PC-3 (cell line): ENCODE measurements at regions of chr11 and their contacts with region 1.

Region 1: GRCh38 chr11:34926101-34926830 is 9.8 kb downstream of the PDHX start:
- DNase-seq: peak; percentile 67
- ATAC-seq: peak; percentile 56
- H3K4me3 ChIP-seq: no peak overlapping the region
- H3K27ac ChIP-seq: no peak overlapping the region
- H3K4me1 ChIP-seq: peaks cover 12% of the 10 kb centered on the region
- H3K27me3 ChIP-seq: no peaks in the 10 kb centered on the region
- CTCF ChIP-seq: peak; percentile 86

Region 2: GRCh38 chr11:34977089-34977906 is 51.0 kb after region 1 on chr11:
- CTCF ChIA-PET with region 1: no interaction called
- POLR2A ChIA-PET with region 1: no interaction called
- intact Hi-C with region 1: loop called (anchors 5 kb)
- DNase-seq: peak; percentile 81
- ATAC-seq: peak; percentile 89
- H3K4me3 ChIP-seq: peak overlapping the region; percentile 38; the same call in 1 of the 2 replicates
- H3K27ac ChIP-seq: peak overlapping the region; percentile 91
- H3K4me1 ChIP-seq: peaks cover 43% of the 10 kb centered on the region
- H3K27me3 ChIP-seq: no peaks in the 10 kb centered on the region
- CTCF ChIP-seq: no peak

Region 3: DNA sequence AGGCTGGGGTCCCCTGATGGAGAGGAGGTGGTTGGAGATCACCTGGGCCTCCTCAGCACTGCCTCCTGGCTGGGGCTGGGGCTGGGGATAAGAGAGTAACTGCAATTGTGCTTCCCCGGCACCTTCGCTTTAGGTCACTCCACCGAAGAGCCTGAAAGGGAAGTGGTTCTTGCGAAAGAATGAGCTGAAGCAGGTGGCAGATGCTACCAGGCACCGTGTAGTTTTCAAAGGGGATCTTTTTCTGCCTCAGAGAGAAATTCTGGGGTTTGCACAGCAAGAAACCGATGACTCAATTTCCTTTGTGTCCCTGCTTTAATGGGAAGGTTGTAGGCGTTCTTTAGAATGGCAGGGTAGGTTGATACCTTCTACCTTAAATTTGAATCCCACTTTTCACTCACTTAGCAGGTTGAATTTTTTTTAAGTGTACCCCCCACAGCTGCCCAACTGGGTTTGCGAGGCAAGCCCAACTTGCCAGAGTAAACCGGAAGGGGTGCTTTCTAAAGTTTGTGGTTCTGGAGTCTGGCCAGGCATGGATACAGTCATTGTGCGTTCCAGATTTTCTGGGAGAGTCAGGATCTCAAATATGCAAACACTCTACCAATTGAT is 218.0 kb after region 1 on chr11:
- CTCF ChIA-PET with region 1: interaction called, 3 read pairs
- POLR2A ChIA-PET with region 1: no interaction called
- intact Hi-C with region 1: loop called (anchors 2 kb)
- DNase-seq: peak; percentile 83
- ATAC-seq: no peak; the same call in 1 of the 2 replicates
- H3K4me3 ChIP-seq: peak overlapping the region; percentile 99
- H3K27ac ChIP-seq: peak overlapping the region; percentile 82
- H3K4me1 ChIP-seq: peaks cover 57% of the 10 kb centered on the region
- H3K27me3 ChIP-seq: no peaks in the 10 kb centered on the region
- CTCF ChIP-seq: no peak

Region 4: GRCh38 chr11:35237860-35238715 is 311.8 kb after region 1 on chr11:
- CTCF ChIA-PET with region 1: no interaction called
- POLR2A ChIA-PET with region 1: no interaction called
- intact Hi-C with region 1: loop called (anchors 5 kb)
- DNase-seq: peak; percentile 59
- ATAC-seq: no peak
- H3K4me3 ChIP-seq: no peak overlapping the region
- H3K27ac ChIP-seq: no peak overlapping the region
- H3K4me1 ChIP-seq: peaks cover 25% of the 10 kb centered on the region
- H3K27me3 ChIP-seq: no peaks in the 10 kb centered on the region
- CTCF ChIP-seq: peak; percentile 95

Region 5: DNA sequence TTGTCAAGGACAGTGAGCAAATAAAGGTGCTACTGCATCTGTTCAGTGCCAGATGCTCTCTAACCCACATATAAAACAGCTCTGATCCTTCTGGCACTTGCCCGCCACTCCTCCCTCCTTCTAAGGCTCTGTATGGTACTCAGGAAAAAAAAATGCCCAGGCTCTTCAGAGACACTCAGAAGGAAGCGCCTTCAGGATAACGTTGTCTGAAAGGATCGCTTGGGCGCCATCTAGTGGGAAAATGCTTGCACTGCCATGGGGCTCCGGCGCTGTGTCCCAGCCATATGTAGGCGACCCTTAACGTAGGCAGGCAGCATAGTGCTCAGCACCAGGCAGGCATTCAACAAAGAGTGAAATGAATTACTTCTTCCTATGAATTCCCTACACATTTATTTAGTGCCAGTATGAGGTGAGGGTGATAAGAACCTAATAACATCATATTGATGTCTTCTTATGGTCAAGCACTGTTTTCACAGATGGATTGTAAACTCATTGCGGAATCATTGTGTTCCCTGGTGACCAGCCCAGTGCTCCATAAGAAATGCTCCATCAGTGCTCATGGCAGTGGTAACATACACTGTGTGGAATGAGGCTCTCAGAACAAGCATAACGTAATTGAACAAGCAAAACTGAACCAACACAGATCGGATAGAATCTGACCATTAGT is 559.5 kb after region 1 on chr11:
- CTCF ChIA-PET with region 1: no interaction called
- POLR2A ChIA-PET with region 1: no interaction called
- intact Hi-C with region 1: loop called (anchors 10 kb)
- DNase-seq: peak; percentile 92
- ATAC-seq: peak; percentile 80
- H3K4me3 ChIP-seq: no peak overlapping the region
- H3K27ac ChIP-seq: no peak overlapping the region
- H3K4me1 ChIP-seq: peaks cover 26% of the 10 kb centered on the region
- H3K27me3 ChIP-seq: no peaks in the 10 kb centered on the region
- CTCF ChIP-seq: peak; percentile 87

Region 6: GRCh38 chr11:35838071-35838470 is 911.8 kb after region 1 on chr11:
- CTCF ChIA-PET with region 1: no interaction called
- POLR2A ChIA-PET with region 1: no interaction called
- intact Hi-C with region 1: no loop called
- DNase-seq: no peak
- ATAC-seq: no peak
- H3K4me3 ChIP-seq: no peak overlapping the region
- H3K27ac ChIP-seq: no peak overlapping the region
- H3K4me1 ChIP-seq: no peaks in the 10 kb centered on the region
- H3K27me3 ChIP-seq: no peaks in the 10 kb centered on the region
- CTCF ChIP-seq: no peak